Calu3 (cell line): ENCODE measurements at regions of chr18 and their contacts with region 1.

Region 1: GRCh38 chr18:77911971-77912605 is 662.4 kb downstream of the GALR1 start:
- DNase-seq: no peak
- H3K4me3 Mint-ChIP-seq: no peak overlapping the region
- H3K27ac Mint-ChIP-seq: no peak overlapping the region
- H3K4me1 Mint-ChIP-seq: no peaks in the 10 kb centered on the region
- H3K27me3 Mint-ChIP-seq: peaks cover 13% of the 10 kb centered on the region
- CTCF ChIP-seq: no peak

Region 2: GRCh38 chr18:76953583-76954233 is 958.4 kb before region 1 on chr18:
- CTCF ChIA-PET with region 1: no interaction called
- intact Hi-C with region 1: loop called (anchors 10 kb)
- DNase-seq: peak; percentile 71
- H3K4me3 Mint-ChIP-seq: peak overlapping the region; percentile 12
- H3K27ac Mint-ChIP-seq: no peak overlapping the region
- H3K4me1 Mint-ChIP-seq: peaks cover 21% of the 10 kb centered on the region
- H3K27me3 Mint-ChIP-seq: peaks cover 41% of the 10 kb centered on the region
- CTCF ChIP-seq: no peak

Region 3: DNA sequence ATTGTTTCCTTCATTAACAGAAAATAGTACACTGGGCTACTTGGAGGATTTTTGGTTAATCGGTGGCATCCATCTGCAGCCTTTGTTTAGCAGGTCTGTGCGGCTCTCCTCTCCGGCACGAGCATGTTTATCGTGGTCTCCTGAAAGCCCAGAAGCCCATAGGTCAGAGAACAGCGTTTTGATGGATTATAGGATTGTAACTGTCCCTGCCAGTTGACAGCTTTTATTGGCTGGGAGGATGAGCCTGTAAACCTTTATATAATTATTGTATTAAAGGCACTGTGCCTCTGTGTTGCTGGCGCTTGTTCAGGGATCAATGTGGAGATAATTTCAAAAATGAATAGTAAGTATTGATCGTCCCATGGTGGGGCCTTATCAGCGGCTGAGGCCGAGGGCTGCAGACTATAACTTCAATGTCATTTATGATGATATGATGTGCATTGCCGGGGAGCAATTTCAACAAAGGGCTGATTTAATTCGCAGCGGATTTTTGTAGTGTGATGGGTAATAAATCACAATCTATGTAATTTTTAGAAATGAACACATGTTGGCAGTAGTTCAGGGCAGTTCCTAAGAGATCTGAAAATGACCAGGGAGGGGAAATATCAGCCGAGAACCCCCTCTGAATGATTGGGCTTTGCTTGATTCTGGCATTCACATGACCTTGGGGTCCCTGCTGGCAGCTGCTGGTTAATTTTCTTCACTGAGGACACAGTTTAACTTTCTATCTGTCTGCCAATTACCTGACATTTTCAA is 73.6 kb after region 1 on chr18:
- CTCF ChIA-PET with region 1: no interaction called
- intact Hi-C with region 1: no loop called
- DNase-seq: no peak
- H3K4me3 Mint-ChIP-seq: no peak overlapping the region
- H3K27ac Mint-ChIP-seq: no peak overlapping the region
- H3K4me1 Mint-ChIP-seq: no peaks in the 10 kb centered on the region
- H3K27me3 Mint-ChIP-seq: no peaks in the 10 kb centered on the region
- CTCF ChIP-seq: no peak

Region 4: GRCh38 chr18:78021196-78021595 is 109.1 kb after region 1 on chr18:
- CTCF ChIA-PET with region 1: no interaction called
- intact Hi-C with region 1: no loop called
- DNase-seq: no peak
- H3K4me3 Mint-ChIP-seq: no peak overlapping the region
- H3K27ac Mint-ChIP-seq: no peak overlapping the region
- H3K4me1 Mint-ChIP-seq: no peaks in the 10 kb centered on the region
- H3K27me3 Mint-ChIP-seq: no peaks in the 10 kb centered on the region
- CTCF ChIP-seq: no peak

Region 5: GRCh38 chr18:79026491-79026890 is 1114.4 kb after region 1 on chr18:
- CTCF ChIA-PET with region 1: no interaction called
- intact Hi-C with region 1: no loop called
- DNase-seq: no peak
- H3K4me3 Mint-ChIP-seq: no peak overlapping the region
- H3K27ac Mint-ChIP-seq: no peak overlapping the region
- H3K4me1 Mint-ChIP-seq: no peaks in the 10 kb centered on the region
- H3K27me3 Mint-ChIP-seq: no peaks in the 10 kb centered on the region
- CTCF ChIP-seq: no peak